HepG2 (cell line): ENCODE measurements at regions of chr6 and their contacts with region 1.

Region 1: DNA sequence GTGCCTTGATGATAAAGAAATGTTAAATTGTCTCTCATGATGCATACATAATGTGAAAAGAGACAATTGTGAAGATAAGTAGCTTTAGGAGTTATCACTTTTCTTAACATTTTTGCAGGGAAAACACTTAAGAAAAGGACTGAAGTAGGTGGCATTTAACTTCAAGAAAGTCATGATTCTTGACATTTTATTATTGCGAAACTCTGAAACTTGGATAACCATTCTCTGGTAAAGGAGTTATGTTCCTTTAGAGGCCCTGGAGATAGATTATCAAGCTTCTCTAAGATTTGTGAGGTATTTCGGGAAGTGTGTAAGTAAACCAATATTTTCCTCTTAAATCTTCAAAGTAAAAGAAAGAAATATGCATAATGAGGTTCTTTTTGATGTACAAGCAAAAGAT is 38.5 kb downstream of the HTR1B start:
- DNase-seq: no peak
- ATAC-seq: no peak
- H3K4me3 ChIP-seq: no peak overlapping the region
- H3K27ac ChIP-seq: no peak overlapping the region
- H3K4me1 ChIP-seq: no peaks in the 10 kb centered on the region
- H3K27me3 ChIP-seq: no peaks in the 10 kb centered on the region
- CTCF ChIP-seq: no peak
- EP300 ChIP-seq: no peak
- POLR2A ChIP-seq: no peak
- RAD21 ChIP-seq: no peak

Region 2: DNA sequence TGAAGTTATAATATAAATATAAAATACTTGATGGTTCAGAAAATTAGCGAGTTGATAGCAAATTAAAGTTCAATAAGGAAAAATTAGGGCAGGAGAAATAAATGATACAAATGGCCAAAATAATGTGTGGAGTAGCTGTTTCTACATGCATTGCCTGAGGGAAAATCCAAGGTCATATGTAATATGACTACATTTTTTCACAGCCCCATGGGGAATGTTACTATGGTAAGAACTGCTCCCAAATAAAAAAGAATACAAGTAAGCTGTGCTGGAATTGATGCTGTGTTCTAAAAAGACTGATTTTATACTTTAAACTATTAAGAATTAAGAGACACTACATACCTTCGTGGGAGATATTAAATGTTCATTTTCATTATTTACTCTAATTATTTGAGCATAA is 262.2 kb after region 1 on chr6:
- CTCF ChIA-PET with region 1: no interaction called
- POLR2A ChIA-PET with region 1: no interaction called
- in situ Hi-C with region 1: no loop called
- intact Hi-C with region 1: no loop called
- DNase-seq: no peak
- ATAC-seq: no peak
- H3K4me3 ChIP-seq: no peak overlapping the region
- H3K27ac ChIP-seq: no peak overlapping the region
- H3K4me1 ChIP-seq: no peaks in the 10 kb centered on the region
- H3K27me3 ChIP-seq: no peaks in the 10 kb centered on the region
- CTCF ChIP-seq: no peak
- EP300 ChIP-seq: no peak
- POLR2A ChIP-seq: no peak
- RAD21 ChIP-seq: no peak

Region 3: GRCh38 chr6:78788824-78789223 is 1364.1 kb after region 1 on chr6:
- CTCF ChIA-PET with region 1: no interaction called
- POLR2A ChIA-PET with region 1: no interaction called
- in situ Hi-C with region 1: no loop called
- intact Hi-C with region 1: loop called (anchors 5 kb)
- DNase-seq: no peak
- ATAC-seq: no peak
- H3K4me3 ChIP-seq: no peak overlapping the region
- H3K27ac ChIP-seq: no peak overlapping the region
- H3K4me1 ChIP-seq: no peaks in the 10 kb centered on the region
- H3K27me3 ChIP-seq: no peaks in the 10 kb centered on the region
- CTCF ChIP-seq: no peak
- EP300 ChIP-seq: no peak
- POLR2A ChIP-seq: no peak
- RAD21 ChIP-seq: no peak